ENCODE measurements at regions of chr1 and their contacts with region 1.

Region 1: DNA sequence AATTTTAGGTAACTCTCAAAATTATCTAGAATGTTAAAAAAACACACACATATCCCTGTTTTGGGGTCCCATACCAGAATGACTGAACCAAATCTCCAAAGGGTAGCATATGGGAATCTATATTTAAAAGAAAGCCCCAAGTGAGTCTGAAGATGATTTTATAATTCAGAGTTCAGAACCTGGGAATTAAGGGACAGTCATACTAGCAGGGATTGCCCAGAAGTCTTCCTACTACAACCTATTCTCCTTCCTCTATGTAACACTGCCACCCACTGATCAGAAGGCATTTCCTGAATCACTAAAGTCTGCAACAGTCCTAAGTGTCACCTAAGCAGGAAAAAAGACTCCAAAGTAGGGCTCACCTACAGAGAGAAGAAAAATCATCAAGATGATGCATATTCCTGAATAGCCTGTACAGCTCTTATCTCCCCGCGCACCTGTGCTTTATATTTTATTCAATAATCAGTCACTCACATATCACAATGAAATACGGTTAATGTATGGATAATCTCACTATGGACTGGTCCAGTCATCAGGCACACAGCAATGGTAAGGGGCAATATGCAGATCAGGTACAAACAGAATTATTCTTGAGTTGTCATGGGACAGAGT is 4.9 kb downstream of the RGS1 start:
- DNase-seq: peak; percentile 68
- ATAC-seq: peak; percentile 86
- H3K4me3 ChIP-seq: no peak overlapping the region
- H3K27ac ChIP-seq: no peak overlapping the region
- H3K4me1 ChIP-seq: no peaks in the 10 kb centered on the region
- H3K27me3 ChIP-seq: no peaks in the 10 kb centered on the region
- CTCF ChIP-seq: peak; percentile 69
- POLR2A ChIP-seq: no peak
- RAD21 ChIP-seq: peak; percentile 81

Region 2: GRCh38 chr1:192530254-192530653 is 50.2 kb before region 1 on chr1:
- CTCF ChIA-PET with region 1: no interaction called
- POLR2A ChIA-PET with region 1: no interaction called
- dilution Hi-C with region 1: no loop called
- in situ Hi-C with region 1: no loop called
- intact Hi-C with region 1: loop called (anchors 5 kb)
- DNase-seq: peak; percentile 48
- ATAC-seq: 0 out of 2 replicates have a peak, but pooled peaks have one; percentile 21
- H3K4me3 ChIP-seq: no peak overlapping the region
- H3K27ac ChIP-seq: peak overlapping the region; percentile 35; the same call in 1 of the 2 replicates
- H3K4me1 ChIP-seq: peaks cover 11% of the 10 kb centered on the region
- H3K27me3 ChIP-seq: no peaks in the 10 kb centered on the region
- CTCF ChIP-seq: no peak
- POLR2A ChIP-seq: no peak
- RAD21 ChIP-seq: no peak

Region 3: DNA sequence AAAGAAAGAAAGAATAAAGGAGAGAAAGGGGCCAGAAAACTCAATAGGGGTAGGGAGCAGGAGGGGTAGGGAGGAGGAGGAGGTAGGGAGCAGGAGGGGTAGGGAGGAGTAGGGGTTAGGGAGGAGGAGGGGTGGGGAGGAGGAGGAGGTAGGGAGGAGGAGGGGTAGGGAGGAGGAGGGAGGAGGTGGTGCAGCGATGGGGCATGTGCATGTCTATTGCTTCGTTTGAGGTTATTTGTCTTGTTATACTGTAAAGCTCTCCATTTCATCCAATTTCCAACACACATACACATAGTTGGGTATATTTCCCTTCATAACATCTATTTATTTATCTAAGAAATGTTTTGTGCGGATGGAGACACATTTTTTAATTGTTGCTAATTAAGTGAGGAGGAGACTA is 14.8 kb after region 1 on chr1:
- CTCF ChIA-PET with region 1: interaction called, 3 read pairs
- POLR2A ChIA-PET with region 1: interaction called, 13 read pairs
- dilution Hi-C with region 1: no loop called
- in situ Hi-C with region 1: no loop called
- intact Hi-C with region 1: no loop called
- DNase-seq: no peak
- ATAC-seq: no peak
- H3K4me3 ChIP-seq: no peak overlapping the region
- H3K27ac ChIP-seq: no peak overlapping the region
- H3K4me1 ChIP-seq: no peaks in the 10 kb centered on the region; the same call in 1 of the 2 replicates
- H3K27me3 ChIP-seq: no peaks in the 10 kb centered on the region
- CTCF ChIP-seq: no peak
- POLR2A ChIP-seq: no peak
- RAD21 ChIP-seq: no peak

Region 4: DNA sequence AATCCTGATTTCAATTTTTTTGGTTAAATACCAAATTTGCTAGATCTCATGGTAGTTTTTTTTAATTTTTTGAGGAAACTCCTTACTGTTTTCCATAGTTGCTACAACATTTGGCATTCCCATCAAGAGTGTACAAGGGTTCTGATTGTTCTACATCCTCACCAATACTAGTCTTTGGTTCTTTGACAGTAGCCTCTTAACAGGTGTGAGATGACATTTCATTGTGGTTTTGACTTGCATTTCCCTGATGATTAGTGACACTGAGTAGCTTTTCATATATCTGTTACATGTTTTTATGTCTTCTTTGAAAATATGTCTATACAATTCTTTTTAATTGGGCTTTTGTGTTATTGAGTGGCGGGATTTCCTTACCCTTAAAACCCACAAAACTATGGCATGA is 34.6 kb after region 1 on chr1:
- CTCF ChIA-PET with region 1: no interaction called
- POLR2A ChIA-PET with region 1: no interaction called
- dilution Hi-C with region 1: no loop called
- in situ Hi-C with region 1: no loop called
- intact Hi-C with region 1: no loop called
- DNase-seq: no peak
- ATAC-seq: no peak
- H3K4me3 ChIP-seq: no peak overlapping the region
- H3K27ac ChIP-seq: no peak overlapping the region
- H3K4me1 ChIP-seq: no peaks in the 10 kb centered on the region
- H3K27me3 ChIP-seq: no peaks in the 10 kb centered on the region
- CTCF ChIP-seq: no peak
- POLR2A ChIP-seq: no peak
- RAD21 ChIP-seq: no peak

Region 5: GRCh38 chr1:192793983-192794767 is 213.7 kb after region 1 on chr1:
- CTCF ChIA-PET with region 1: no interaction called
- POLR2A ChIA-PET with region 1: no interaction called
- dilution Hi-C with region 1: no loop called
- in situ Hi-C with region 1: no loop called
- intact Hi-C with region 1: no loop called
- DNase-seq: peak; percentile 51
- ATAC-seq: peak; percentile 84
- H3K4me3 ChIP-seq: no peak overlapping the region
- H3K27ac ChIP-seq: no peak overlapping the region
- H3K4me1 ChIP-seq: peaks cover 2% of the 10 kb centered on the region
- H3K27me3 ChIP-seq: no peaks in the 10 kb centered on the region
- CTCF ChIP-seq: no peak
- POLR2A ChIP-seq: no peak
- RAD21 ChIP-seq: no peak

Measured in IMR-90 (cell line).